Ovary (tissue), 10 donors: ENCODE measurements at regions of chr3 and their contacts with region 1.

Region 1: DNA sequence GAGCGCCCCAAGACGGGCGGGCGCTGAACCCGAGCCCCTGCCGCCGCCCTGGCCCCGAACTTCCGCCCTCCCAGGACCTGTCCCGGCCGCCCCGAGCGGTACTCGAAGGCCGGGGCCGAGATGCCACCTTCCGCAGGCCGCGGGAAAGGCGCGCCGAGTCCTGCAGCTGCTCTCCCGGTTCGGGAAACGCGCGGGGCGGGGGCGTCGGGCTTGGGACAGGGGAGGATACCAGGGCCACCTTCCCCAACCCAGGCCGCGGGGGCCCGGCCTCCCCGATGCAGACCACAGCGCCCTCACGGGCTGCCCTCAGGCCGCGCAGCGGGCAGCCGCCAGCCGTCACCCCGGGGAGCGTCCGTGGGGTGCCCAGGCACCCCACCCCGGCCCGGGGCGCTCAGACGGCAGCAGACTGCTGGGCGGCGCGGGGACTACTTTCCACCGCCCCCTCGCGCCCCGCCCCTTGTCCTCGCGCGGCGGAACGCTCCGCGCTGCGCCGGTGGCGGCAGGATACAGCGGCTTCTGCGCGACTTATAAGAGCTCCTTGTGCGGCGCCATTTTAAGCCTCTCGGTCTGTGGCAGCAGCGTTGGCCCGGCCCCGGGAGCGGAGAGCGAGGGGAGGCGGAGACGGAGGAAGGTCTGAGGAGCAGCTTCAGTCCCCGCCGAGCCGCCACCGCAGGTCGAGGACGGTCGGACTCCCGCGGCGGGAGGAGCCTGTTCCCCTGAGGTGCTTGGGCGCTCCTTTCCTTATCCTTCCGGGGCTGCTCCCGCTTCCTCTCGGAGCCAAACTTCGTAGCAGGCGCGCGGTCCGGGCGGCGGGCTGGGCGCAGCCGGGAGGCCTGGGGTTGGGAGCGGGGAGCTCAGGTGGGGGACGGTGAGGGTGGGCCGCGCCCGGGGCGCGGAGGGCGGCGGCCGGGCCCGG is at the start of gene CTNNB1:
- DNase-seq: peak; percentile 92 to 97 (median 96)
- H3K4me3 ChIP-seq: peak within 1 kb of the TSS; percentile 89
- H3K27ac ChIP-seq: peak within 1 kb of the TSS; percentile 91 to 93
- H3K4me1 ChIP-seq: no peaks in the 10 kb centered on the region
- H3K27me3 ChIP-seq: no peaks in the 10 kb centered on the region
- CTCF ChIP-seq: peak in 2 of 3 donors; percentile 32 to 55
- EP300 ChIP-seq: no peak
- POLR2A ChIP-seq: peak; percentile 100
- total RNA-seq, gene CTNNB1: 311 to 495 (median 405) TPM

Region 2: DNA sequence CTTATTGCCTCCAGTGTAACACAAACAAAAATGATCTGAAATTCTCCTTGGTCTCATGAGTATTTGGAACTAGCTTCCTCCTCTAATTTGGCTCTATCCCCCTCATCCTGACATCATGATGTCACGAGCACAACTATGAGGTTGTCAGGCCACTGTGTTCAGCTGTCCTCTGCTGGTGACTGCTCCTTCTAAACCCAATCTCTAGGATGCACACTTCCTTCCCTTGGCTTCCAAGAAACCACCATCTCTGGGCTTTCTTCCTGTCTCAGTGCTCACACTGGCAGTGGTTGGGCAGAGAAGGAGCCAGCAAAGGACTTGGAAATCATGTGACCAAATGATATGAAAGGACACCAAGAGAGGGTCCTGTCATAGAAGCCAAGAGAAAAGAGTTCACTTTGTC is 920.4 kb before region 1 on chr3:
- intact Hi-C with region 1: no loop called
- DNase-seq: no peak
- H3K4me3 ChIP-seq: no peak overlapping the region
- H3K27ac ChIP-seq: no peak overlapping the region
- H3K4me1 ChIP-seq: no peaks in the 10 kb centered on the region
- H3K27me3 ChIP-seq: no peaks in the 10 kb centered on the region
- CTCF ChIP-seq: no peak
- EP300 ChIP-seq: no peak
- POLR2A ChIP-seq: no peak

Region 3: DNA sequence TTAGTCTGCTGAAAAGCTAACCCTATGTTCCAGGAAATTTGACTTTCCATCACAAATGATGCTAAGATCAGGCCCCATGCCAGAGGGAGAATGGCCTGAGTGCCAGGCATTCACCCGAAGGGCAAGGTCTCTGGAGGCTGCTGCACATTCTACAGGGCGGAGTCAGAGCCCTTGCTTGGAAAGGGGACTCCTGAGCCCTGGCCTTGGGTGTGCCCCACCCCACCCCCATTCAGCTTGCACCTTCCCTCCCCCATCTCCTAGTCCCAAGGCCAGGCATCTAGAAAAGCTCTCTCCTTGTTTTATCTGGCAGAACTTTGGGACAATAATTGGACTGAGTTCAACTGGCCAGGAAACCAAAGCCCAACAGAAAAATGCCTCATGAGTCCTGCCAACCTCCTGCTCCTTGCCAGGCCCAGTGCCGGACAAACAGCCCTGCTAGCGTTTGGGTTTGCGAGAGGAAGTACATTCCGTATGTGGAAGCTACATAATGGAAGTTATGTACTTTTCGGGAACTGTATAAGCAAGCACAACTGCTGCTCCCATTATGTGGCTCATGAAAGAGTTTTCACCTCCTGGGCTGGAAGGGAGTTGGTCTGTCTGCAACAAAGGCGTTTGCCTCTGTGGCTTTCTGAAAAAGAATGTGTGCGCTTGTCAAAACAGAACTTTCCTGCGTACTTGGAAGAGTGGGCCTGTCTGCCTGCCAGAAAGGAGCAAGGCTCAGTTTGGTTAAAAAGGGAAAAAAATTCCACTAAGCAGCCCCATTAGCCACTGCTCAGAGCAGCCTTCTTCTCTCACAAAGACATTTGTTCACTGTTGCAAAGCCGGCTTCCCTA is 321.4 kb before region 1 on chr3:
- intact Hi-C with region 1: loop called in 1 of 4 experiments (anchors 10 kb)
- DNase-seq: peak; percentile 64 to 77 (median 72)
- H3K4me3 ChIP-seq: no peak overlapping the region
- H3K27ac ChIP-seq: peak overlapping the region in 1 of 2 donors; percentile 67
- H3K4me1 ChIP-seq: peaks cover 14% of the 10 kb centered on the region
- H3K27me3 ChIP-seq: no peaks in the 10 kb centered on the region
- CTCF ChIP-seq: no peak
- EP300 ChIP-seq: no peak
- POLR2A ChIP-seq: no peak

Region 4: DNA sequence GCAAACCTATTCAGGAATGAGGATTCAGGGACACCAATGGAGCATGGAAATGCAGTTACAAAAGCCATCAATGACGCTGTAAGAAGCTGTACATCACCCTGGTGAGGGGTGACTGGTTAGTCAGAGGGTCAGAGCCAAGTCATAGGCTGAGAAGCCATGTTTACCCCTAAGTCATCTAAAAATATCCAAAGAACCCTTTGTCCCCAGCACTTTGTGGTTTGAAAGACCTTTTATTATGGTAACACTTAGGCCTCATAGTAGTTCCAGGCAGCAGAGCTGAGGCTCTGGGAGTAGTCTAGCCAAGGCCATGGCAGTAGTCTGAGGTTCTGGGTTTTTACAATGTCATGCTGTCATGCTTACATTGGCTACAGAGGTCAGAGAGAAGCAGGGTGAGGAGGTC is 131.3 kb after region 1 on chr3:
- intact Hi-C with region 1: no loop called
- DNase-seq: no peak
- H3K4me3 ChIP-seq: no peak overlapping the region
- H3K27ac ChIP-seq: no peak overlapping the region
- H3K4me1 ChIP-seq: peaks cover 3% of the 10 kb centered on the region
- H3K27me3 ChIP-seq: no peaks in the 10 kb centered on the region
- CTCF ChIP-seq: no peak
- EP300 ChIP-seq: no peak
- POLR2A ChIP-seq: no peak